Heart left ventricle (tissue), 16 donors: ENCODE measurements at regions of chr21 and their contacts with region 1.

Region 1: DNA sequence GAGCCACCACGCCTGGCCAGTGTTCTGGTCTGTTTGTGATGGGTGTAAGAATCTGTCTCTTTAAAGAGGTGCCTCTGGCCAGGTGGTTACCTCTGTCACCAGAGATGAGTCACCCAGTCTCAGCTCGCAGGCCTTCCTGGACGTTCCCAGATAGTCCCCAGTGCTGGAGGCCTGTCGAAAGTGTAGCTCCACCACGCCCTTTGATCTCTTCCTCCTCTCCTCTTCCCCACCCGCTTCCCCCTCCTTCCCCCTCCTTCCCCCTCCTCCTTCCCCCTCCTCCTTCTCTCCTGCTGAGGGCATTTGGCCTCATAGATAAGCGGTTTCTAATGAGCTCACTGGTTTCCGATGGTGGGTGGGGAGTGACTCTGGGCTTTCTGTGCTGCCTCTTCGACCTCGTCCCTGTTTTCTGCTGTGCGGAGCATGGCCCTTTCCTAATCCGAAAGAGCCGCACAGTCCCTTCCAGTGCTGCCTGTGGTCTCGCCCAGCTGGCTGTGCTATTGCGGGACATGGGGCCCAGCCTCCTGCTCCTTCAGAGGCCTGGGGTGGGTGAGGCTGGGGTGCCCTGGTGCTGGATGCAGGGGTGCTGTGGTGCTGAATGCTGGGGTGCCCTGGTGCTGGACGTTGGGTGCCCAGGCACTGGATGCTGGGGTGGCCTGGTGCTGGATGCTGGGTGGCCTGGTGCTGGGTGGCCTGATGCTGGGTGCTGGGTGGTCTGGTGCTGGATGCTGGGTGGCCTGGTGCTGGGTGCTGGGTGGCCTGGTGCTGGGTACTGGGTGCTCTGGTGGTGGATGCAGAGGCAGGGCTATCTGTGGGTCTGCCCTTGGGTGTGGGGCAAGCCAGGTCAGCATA is 19.2 kb downstream of the AGPAT3 start:
- DNase-seq: peak in 1 of 5 donors; percentile 34
- ATAC-seq: peak; percentile 36 to 64 (median 54)
- H3K4me3 ChIP-seq: peak overlapping the region in 1 of 12 donors; percentile 10
- H3K27ac ChIP-seq: peak overlapping the region in 8 of 12 donors; percentile 13 to 69 (median 48)
- H3K4me1 ChIP-seq: peaks cover 0 to 57% (median 41%) of the 10 kb centered on the region in 12 donors
- H3K27me3 ChIP-seq: no peaks in the 10 kb centered on the region
- CTCF ChIP-seq: no peak
- POLR2A ChIP-seq: no peak

Region 2: DNA sequence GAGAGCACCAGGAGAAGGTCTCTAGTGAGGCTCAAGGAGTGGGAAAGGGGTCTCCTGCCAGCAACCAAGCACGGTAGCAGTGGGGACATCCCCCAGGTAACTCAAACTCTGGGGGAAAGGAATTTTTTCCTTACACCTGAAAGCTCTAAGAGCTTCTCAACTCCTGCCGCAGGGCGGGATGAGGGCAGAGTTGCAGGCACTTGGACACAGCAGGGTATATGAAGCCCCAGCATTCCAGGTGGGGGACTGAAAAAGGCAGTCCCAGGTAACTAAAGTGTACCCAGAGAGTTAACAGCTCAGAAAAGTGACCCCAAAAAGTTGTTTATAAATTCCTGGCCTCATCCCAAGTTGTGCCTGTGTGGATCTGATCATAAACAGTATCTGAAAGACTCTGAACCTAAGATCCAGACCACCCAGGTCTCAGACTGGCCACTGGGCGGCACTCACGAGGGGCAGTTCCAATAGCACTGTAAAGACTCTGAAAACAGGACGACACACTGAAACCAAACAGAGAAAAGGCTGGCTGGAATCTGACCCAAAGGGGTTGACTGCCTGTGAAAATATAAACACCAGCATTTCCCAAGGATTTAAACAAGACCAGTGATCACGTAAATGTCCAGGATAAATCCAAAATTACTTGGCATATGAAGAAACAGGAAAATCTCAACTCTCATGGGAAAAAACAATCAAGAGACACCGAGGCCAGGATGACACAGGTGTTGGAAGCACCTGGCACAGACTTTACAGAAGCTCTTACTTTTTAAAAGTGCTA is 272.5 kb before region 1 on chr21:
- intact Hi-C with region 1: no loop called
- DNase-seq: peak; percentile 52 to 70 (median 66)
- ATAC-seq: peak; percentile 40 to 88 (median 84)
- H3K4me3 ChIP-seq: no peak overlapping the region
- H3K27ac ChIP-seq: no peak overlapping the region
- H3K4me1 ChIP-seq: peaks cover 0 to 17% (median 6%) of the 10 kb centered on the region in 12 donors
- H3K27me3 ChIP-seq: no peaks in the 10 kb centered on the region
- CTCF ChIP-seq: peak; percentile 57 to 81 (median 70)
- POLR2A ChIP-seq: no peak

Region 3: DNA sequence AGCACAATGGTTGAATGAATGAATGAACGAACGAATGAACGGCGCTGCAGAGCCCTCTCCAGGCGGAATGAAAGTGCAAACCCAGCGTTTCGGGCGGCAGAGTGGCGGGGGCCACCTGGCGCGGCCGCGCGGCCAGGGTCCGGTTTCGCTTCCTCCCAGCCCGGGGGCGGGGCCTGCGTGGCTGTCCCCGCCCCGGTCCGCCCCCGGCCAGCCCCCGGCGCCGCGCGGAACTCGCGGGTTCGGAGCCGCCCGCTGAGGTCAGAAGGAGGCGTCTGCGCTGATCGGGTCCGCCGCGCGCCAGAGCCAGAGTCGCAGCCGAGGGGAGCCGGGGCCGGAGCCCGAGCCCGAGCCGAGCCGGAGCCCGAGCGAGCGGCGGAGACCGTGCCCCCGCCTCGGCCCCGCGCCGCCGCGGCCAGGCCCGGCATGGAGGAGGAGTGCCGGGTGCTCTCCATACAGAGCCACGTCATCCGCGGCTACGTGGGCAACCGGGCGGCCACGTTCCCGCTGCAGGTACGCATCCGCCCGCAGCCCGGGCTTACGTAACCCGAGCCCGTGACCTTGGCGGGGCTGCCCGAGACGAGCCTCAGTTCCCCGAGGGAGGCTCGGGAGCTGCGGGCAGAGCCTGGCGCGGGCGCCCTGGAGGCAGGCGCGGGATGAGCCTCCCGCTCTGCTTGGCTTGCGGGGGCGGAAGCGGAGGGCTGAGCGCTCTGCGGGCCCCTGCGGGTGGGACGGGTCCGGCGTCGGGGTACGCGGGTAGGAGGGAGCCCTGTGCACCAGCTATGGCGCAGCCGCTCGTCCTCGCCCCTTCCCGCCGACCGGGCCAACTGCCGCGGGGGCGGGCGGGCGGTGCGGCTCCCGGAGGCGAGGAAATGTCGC is 165.1 kb before region 1 on chr21 and contains the start of gene PDXK:
- intact Hi-C with region 1: no loop called
- DNase-seq: peak; percentile 86 to 95 (median 90)
- ATAC-seq: peak; percentile 78 to 94 (median 92)
- H3K4me3 ChIP-seq: peak within 1 kb of the TSS; percentile 71 to 100 (median 96)
- H3K27ac ChIP-seq: peak within 1 kb of the TSS; percentile 14 to 93 (median 80)
- H3K4me1 ChIP-seq: peaks cover 0 to 36% (median 27%) of the 10 kb centered on the region in 12 donors
- H3K27me3 ChIP-seq: no peaks in the 10 kb centered on the region
- CTCF ChIP-seq: peak in 2 of 12 donors; percentile 25 to 32
- POLR2A ChIP-seq: peak in 1 of 2 donors; percentile 81
- total RNA-seq, gene PDXK: 46.5 to 105 (median 79.7) TPM

Region 4: DNA sequence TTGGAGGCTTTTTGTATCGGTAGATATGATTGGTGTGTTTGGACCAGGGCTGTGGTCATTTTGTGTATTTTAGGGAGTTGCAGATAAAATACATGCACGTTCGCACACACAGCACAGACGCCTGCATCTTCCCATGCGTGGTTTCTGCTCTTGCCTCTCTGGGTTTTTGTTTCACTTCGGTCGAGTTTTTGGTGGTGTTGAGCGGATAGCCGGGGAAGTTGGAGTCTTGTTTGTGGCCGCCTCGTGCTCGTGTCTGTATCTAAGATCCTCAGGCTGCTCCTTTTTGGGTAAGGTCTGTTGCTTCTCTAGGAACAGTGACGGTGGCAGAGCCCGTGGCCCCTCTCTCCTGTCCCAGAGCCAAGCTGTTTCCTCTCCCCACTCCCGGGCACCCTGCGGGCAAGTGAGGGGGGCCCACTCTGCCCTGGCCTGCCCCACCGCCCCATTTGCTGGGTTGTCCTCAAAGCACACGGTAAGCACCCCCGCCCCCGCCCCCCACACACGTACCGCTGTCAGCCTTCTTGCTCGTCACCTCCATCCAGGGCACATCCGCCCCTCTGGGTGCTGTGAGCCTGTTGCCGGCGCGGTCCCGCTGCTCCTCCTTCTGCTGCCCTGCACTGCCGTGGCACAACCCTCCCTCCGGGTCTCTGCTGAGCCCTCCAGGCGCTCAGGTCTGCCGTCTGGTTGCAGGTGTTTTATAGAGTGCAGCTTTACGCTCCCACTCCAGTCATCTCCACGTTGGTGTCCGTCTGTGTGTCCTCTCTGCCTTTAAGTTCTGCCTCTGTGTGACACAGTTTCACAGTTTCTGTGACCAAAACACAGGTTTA is 32.7 kb after region 1 on chr21:
- intact Hi-C with region 1: loop called in 2 of 10 experiments (anchors 5 kb)
- DNase-seq: peak in 2 of 5 donors; percentile 44 to 64
- ATAC-seq: peak; percentile 32 to 65 (median 53)
- H3K4me3 ChIP-seq: peak overlapping the region in 8 of 12 donors; percentile 20 to 50 (median 35)
- H3K27ac ChIP-seq: peak overlapping the region in 4 of 12 donors; percentile 28 to 53 (median 46)
- H3K4me1 ChIP-seq: peaks cover 4 to 62% (median 27%) of the 10 kb centered on the region in 12 donors
- H3K27me3 ChIP-seq: no peaks in the 10 kb centered on the region
- CTCF ChIP-seq: no peak
- POLR2A ChIP-seq: no peak

Region 5: GRCh38 chr21:43921979-43922945 is 38.0 kb after region 1 on chr21:
- intact Hi-C with region 1: loop called in 2 of 10 experiments (anchors 5 kb)
- DNase-seq: peak in 1 of 5 donors; percentile 37
- ATAC-seq: peak in 1 of 4 donors; percentile 53
- H3K4me3 ChIP-seq: no peak overlapping the region
- H3K27ac ChIP-seq: peak overlapping the region in 9 of 12 donors; percentile 21 to 82 (median 53)
- H3K4me1 ChIP-seq: peaks cover 7 to 75% (median 41%) of the 10 kb centered on the region in 12 donors
- H3K27me3 ChIP-seq: no peaks in the 10 kb centered on the region
- CTCF ChIP-seq: no peak
- POLR2A ChIP-seq: no peak